GM10248 (cell line): ENCODE measurements at regions of chr20 and their contacts with region 1.

Region 1: DNA sequence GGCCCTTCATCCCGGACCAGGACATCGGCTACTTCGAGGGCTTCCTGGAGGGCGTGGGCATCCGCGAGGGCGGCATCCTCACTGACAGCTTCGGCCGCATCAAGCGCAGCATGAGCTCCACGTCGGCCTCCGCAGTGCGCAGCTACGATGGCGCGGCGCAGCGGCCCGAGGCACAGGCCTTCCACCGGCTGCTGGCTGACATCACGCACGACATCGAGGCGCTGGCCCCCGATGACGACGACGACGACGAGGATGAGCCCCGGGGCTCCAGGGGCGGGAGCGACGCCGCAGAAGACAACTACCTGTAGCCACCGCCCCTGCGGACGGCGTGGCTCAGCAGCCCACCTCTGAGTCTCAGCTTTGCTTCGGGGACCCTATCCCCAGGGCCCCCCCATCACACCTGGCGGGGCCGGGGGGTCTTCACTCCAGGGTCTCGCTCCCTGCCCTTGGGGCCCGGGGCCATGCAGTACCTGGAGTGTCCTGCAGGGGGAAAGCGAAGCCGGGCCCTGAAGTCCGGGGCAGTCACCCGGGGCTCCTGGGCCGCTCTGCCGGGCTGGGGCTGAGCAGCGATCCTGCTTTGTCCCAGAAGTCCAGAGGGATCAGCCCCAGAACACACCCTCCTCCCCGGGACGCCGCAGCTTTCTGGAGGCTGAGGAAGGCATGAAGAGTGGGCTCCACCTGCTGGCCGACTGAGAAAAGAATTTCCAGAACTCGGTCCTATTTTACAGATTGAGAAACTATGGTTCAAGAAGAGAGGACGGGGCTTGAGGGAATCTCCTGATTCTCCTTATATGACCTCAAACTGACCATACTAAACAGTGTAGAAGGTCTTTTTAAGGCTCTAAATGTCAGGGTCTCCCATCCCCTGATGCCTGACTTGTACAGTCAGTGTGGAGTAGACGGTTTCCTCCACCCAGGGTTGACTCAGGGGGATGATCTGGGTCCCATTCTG is 20.8 kb upstream of the HCK start:
- DNase-seq: peak; percentile 69
- CTCF ChIP-seq: peak; percentile 60

Region 2: DNA sequence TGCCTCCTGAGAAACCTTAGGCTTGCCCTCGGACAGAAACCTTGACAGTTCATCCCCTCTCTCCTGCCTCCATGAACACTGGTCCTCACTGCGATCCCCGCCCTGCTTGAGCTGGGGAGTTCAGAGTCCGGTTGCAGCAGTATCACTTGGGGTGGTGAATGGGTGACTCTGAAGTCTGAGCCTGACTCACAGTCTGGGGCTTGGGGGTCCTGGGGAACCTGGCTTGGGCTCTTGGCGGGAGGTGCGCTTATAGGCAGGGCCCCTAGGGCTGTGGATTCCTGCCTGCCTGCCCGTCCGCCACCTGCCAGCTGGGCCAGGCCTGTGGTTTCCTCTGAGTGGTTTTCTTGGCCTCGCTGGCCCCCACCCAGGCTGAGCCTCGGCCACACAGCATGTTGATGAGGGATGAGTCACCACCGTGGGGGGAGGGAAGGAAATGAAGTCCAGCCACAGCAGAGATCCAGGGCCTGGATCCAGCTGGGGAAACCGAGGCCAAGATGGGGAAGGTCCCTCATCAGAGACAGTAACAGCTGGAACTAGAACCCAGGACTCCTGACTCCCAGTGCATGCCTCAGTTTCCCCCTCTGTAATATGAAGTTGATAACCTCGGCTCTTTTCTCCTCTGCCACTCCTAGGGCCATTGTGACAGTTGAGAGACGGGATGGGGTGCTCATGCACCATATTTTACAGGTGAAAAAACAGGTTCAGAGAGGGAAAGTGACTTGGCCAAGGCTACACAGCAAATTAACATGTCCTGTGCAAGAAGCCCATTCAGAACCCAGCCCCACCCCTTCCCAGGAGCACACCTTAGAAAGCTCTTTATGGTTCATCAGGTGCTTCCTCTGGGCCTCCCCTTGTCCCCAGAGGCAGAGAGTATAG is 195.1 kb before region 1 on chr20:
- CTCF ChIA-PET with region 1: interaction called, 10 read pairs
- POLR2A ChIA-PET with region 1: no interaction called
- DNase-seq: peak; percentile 71
- CTCF ChIP-seq: no peak

Region 3: DNA sequence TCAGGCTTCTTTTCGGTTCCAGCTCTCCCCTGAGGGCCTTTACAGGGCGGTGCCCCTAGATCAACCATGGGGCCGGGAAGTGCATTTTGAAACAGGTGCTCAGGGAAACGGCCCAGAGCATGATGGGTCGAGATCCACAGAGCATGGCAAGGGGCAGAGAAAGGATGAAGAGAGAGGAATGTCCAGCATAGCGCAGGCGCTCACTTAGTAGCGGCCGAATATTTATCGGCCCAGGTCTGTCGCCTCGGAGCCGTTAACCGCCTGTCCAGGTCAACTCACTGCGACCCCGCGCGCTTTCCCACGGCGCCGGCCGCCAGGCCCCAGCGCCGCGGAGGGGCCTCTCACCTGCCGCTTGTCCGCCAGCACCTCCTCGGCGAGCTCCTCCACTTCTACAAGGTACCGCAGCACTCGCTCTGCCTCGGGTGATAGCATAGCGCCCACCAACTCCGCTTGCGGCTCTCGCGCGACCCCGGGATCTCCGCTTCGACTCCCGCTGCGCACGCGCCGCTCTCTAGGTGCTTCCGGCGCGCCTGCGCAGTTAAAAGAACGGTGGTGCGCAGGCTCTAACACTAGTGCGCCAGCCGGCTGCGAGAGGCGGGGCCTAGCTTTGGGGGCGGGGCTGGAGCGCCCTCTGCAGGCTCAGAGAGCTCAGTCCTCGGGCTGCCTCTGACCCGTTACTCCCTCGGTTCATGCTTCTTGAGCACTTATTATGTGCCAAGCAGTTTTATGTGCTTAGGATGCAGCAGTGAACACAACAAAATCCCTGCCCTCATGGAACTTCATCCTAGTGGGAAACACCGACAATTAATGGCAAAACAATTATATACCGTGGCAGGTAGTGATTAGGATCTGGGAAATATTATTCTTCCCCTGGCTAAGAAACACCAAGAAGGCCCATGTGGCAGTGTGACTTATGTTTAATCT is 79.5 kb before region 1 on chr20 and contains the start of gene PDRG1:
- CTCF ChIA-PET with region 1: interaction called, 15 read pairs
- POLR2A ChIA-PET with region 1: no interaction called
- DNase-seq: peak; percentile 97
- CTCF ChIP-seq: peak; percentile 91

Region 4: GRCh38 chr20:32018269-32019074 is 12.8 kb before region 1 on chr20:
- CTCF ChIA-PET with region 1: interaction called, 92 read pairs
- POLR2A ChIA-PET with region 1: no interaction called
- DNase-seq: peak; percentile 76
- CTCF ChIP-seq: no peak

Region 5: GRCh38 chr20:32072168-32072750 is 41.0 kb after region 1 on chr20:
- CTCF ChIA-PET with region 1: interaction called, 34 read pairs
- POLR2A ChIA-PET with region 1: no interaction called
- DNase-seq: no peak
- CTCF ChIP-seq: no peak

Region 6: DNA sequence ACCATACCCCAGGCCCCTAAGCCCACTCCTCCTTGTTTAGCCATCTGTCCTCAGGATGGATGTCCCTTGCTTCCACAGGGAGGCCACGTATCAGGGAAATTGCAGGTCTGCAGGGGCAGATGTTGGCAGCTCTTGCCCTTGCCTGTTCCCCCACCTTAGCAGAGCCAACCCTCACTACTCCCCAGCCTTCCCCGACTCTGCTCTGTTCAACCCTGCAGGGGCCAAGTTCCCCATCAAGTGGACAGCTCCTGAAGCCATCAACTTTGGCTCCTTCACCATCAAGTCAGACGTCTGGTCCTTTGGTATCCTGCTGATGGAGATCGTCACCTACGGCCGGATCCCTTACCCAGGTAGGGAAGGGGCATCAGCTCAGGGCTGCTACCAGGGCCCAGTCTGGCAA is 67.5 kb after region 1 on chr20:
- CTCF ChIA-PET with region 1: interaction called, 46 read pairs
- POLR2A ChIA-PET with region 1: no interaction called
- DNase-seq: no peak
- CTCF ChIP-seq: no peak

Region 7: GRCh38 chr20:32207626-32208498 is 176.6 kb after region 1 on chr20 and contains the starts of genes PLAGL2 and POFUT1:
- CTCF ChIA-PET with region 1: no interaction called
- POLR2A ChIA-PET with region 1: no interaction called
- DNase-seq: peak; percentile 99
- CTCF ChIP-seq: peak; percentile 24

Region 8: GRCh38 chr20:32743237-32744112 is 712.2 kb after region 1 on chr20 and contains the start of gene COMMD7:
- CTCF ChIA-PET with region 1: no interaction called
- POLR2A ChIA-PET with region 1: no interaction called
- DNase-seq: peak; percentile 73
- CTCF ChIP-seq: no peak